HEK293T (cell line): ENCODE measurements at regions of chr5 and their contacts with region 1.

Region 1: GRCh38 chr5:127072861-127073846 is at the start of gene C5orf63:
- DNase-seq: peak; percentile 87

Region 2: GRCh38 chr5:127011961-127012644 is 61.1 kb before region 1 on chr5:
- CTCF ChIA-PET with region 1: no interaction called
- POLR2A ChIA-PET with region 1: no interaction called
- DNase-seq: no peak

Region 3: DNA sequence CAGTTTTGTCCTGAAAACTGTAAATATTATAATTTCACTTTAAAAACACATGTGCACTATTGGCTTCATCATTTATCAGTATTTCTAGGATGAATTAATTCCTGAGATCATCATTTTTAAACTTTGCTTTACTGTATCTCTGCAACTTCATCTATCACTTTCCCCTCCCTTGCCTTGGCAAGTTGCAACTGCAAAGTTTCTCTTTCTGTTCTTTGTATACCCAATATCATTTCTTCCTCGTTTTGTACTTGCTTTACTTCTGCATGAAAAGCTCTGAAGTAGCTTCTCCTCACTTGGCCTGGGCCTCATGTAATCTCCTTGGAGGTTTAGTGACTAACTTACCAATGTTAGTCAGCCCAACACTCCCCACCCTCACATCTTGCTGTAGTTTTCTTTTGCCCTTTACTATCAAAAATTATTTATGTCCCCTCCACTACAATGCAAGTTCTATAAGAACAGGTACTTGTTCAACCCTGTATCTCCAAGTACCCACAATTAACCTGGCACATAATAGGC is 12.6 kb before region 1 on chr5:
- CTCF ChIA-PET with region 1: interaction called, 4 read pairs
- POLR2A ChIA-PET with region 1: interaction called, 12 read pairs
- DNase-seq: no peak